IMR-90 (cell line): ENCODE measurements at regions of chr4 and their contacts with region 1.

Region 1: GRCh38 chr4:55321707-55322264 is 24.3 kb upstream of the SRD5A3 start:
- DNase-seq: peak; percentile 76
- ATAC-seq: peak; percentile 71
- H3K4me3 ChIP-seq: no peak overlapping the region
- H3K27ac ChIP-seq: no peak overlapping the region
- H3K4me1 ChIP-seq: no peaks in the 10 kb centered on the region
- H3K27me3 ChIP-seq: peaks cover 21% of the 10 kb centered on the region
- CTCF ChIP-seq: peak; percentile 79
- POLR2A ChIP-seq: no peak
- RAD21 ChIP-seq: peak; percentile 82

Region 2: DNA sequence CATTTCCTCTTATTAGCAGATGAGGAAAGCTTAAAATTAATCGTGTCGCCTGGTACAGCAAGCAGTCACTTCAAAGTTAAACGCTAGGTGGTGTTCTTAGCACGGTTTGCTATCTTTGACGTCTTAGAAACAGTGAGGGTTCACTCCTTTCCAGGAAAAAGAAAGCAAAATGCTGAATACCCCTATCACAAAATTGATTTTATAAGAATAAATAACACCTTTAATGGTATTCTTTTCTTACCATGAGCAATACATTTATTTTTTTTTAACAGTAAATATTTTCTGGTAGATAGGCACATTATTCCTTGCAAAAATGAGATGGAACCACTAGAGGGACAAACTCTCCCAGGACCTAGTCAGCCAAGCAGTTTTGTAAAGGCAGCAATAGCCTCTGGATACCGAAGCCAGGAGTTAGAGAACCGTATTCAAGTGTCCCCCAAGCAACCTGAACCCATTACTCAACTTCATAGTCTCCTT is 350.3 kb before region 1 on chr4:
- CTCF ChIA-PET with region 1: interaction called, 25 read pairs
- POLR2A ChIA-PET with region 1: no interaction called
- dilution Hi-C with region 1: no loop called
- in situ Hi-C with region 1: loop called (anchors 5 kb)
- intact Hi-C with region 1: loop called (anchors 1 kb)
- DNase-seq: peak; percentile 53
- ATAC-seq: peak; percentile 96
- H3K4me3 ChIP-seq: no peak overlapping the region
- H3K27ac ChIP-seq: no peak overlapping the region
- H3K4me1 ChIP-seq: no peaks in the 10 kb centered on the region
- H3K27me3 ChIP-seq: peaks cover 14% of the 10 kb centered on the region
- CTCF ChIP-seq: peak; percentile 57
- POLR2A ChIP-seq: no peak
- RAD21 ChIP-seq: peak; percentile 59

Region 3: DNA sequence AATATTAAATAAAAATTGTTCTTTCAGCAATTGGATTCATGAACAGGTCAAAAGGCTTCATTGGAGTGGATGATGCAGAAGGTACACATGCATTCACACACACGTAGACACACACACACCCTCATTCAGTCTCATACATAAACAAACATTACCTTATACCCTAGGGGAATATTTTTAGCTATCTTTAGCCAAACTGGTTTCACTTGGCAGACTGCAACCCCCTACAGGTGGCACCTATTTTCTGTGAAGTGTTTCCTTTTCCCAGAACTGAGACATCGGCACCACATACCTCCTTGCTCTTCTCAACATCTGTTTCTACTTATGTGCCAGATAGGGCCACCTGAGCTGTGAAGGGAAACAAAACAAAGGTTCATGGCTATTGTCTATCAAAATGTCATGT is 177.9 kb before region 1 on chr4:
- CTCF ChIA-PET with region 1: no interaction called
- POLR2A ChIA-PET with region 1: no interaction called
- dilution Hi-C with region 1: no loop called
- in situ Hi-C with region 1: no loop called
- intact Hi-C with region 1: no loop called
- DNase-seq: no peak
- ATAC-seq: no peak
- H3K4me3 ChIP-seq: no peak overlapping the region
- H3K27ac ChIP-seq: no peak overlapping the region
- H3K4me1 ChIP-seq: no peaks in the 10 kb centered on the region
- H3K27me3 ChIP-seq: peaks cover 1% of the 10 kb centered on the region
- CTCF ChIP-seq: no peak
- POLR2A ChIP-seq: no peak
- RAD21 ChIP-seq: no peak

Region 4: DNA sequence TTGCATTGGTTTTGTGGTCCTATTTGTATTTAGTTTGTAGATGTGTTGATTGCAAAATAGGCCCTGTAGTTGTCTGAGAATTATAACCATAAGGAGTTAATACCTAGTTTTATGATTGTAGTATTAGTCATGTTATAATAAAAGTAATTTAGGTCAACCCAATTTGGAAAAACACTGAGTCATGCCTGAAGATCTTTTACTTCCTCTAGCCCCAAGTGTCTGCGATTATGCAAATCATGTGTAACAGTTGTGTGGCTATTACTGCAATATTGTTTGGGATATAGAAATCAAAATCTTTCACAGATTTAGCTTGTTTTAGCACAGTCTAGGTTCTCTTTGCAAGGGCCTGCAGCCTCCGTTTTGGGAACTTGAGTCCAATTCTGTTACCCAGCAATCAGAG is 36.9 kb after region 1 on chr4:
- CTCF ChIA-PET with region 1: no interaction called
- POLR2A ChIA-PET with region 1: no interaction called
- dilution Hi-C with region 1: no loop called
- in situ Hi-C with region 1: no loop called
- intact Hi-C with region 1: no loop called
- DNase-seq: peak; percentile 78
- ATAC-seq: peak; percentile 67
- H3K4me3 ChIP-seq: no peak overlapping the region
- H3K27ac ChIP-seq: no peak overlapping the region
- H3K4me1 ChIP-seq: peaks cover 10% of the 10 kb centered on the region
- H3K27me3 ChIP-seq: no peaks in the 10 kb centered on the region
- CTCF ChIP-seq: no peak
- POLR2A ChIP-seq: no peak
- RAD21 ChIP-seq: no peak

Region 5: GRCh38 chr4:55395529-55396307 is 73.9 kb after region 1 on chr4 and contains the start of gene TMEM165:
- CTCF ChIA-PET with region 1: interaction called, 10 read pairs
- POLR2A ChIA-PET with region 1: no interaction called
- dilution Hi-C with region 1: no loop called
- in situ Hi-C with region 1: no loop called
- intact Hi-C with region 1: no loop called
- DNase-seq: peak; percentile 79
- ATAC-seq: peak; percentile 92
- H3K4me3 ChIP-seq: peak within 1 kb of the TSS; percentile 99
- H3K27ac ChIP-seq: peak within 1 kb of the TSS; percentile 99
- H3K4me1 ChIP-seq: peaks cover 7% of the 10 kb centered on the region
- H3K27me3 ChIP-seq: no peaks in the 10 kb centered on the region
- CTCF ChIP-seq: no peak
- POLR2A ChIP-seq: peak; percentile 96
- RAD21 ChIP-seq: no peak; the same call in 1 of the 2 replicates
- total RNA-seq, gene TMEM165: 49.6 and 88.3 TPM in 2 replicates